Spleen (tissue), 13 donors: ENCODE measurements at regions of chr9 and their contacts with region 1.

Region 1: DNA sequence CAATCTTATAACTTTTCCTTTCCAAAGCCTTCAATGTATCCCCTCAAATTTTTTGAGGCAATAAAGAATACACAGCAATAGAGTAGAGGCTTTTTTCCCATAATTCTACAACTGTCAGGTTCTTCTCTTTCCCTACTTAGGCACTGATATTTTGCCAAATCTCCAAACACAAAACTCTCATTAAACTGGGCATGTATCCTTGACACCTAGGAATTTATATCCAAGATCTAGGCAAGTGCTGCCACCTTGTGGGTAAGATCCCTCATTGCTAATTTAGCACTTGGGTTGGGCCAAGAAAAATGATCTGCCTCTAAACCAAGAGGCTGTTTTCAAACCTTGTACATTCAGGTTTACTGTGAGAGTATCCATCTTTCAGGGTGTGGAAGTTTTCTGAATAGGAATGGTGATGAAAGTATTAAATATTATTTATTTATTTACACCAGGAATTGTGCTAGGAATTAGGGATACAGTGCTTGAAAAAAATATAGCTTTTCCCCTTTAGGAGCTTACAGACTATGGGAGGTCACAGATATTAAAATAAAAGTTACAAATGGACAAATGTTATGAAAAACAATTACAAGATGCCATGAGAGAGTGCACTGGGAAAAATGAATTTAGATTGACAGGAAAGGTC is 17.6 kb downstream of the TSTD2 start:
- DNase-seq: no peak
- H3K4me3 ChIP-seq: no peak overlapping the region
- H3K27ac ChIP-seq: no peak overlapping the region
- H3K4me1 ChIP-seq: peaks cover 0 to 8% (median 2%) of the 10 kb centered on the region in 6 donors
- H3K27me3 ChIP-seq: no peaks in the 10 kb centered on the region
- CTCF ChIP-seq: peak; percentile 70 to 90 (median 85)
- POLR2A ChIP-seq: no peak

Region 2: GRCh38 chr9:96854073-96854876 is 761.3 kb before region 1 on chr9 and contains the start of gene ZNF782:
- intact Hi-C with region 1: loop called (anchors 10 kb)
- DNase-seq: peak; percentile 96
- H3K4me3 ChIP-seq: peak within 1 kb of the TSS; percentile 82 to 94 (median 93)
- H3K27ac ChIP-seq: peak within 1 kb of the TSS; percentile 58 to 89 (median 80)
- H3K4me1 ChIP-seq: peaks cover 12 to 45% (median 33%) of the 10 kb centered on the region in 6 donors
- H3K27me3 ChIP-seq: peaks cover 0 to 5% (median 0%) of the 10 kb centered on the region in 7 donors
- CTCF ChIP-seq: peak in 1 of 11 experiments; percentile 16
- POLR2A ChIP-seq: no peak
- total RNA-seq, gene ZNF782: 6.2 to 18.0 (median 8.2) TPM

Region 3: DNA sequence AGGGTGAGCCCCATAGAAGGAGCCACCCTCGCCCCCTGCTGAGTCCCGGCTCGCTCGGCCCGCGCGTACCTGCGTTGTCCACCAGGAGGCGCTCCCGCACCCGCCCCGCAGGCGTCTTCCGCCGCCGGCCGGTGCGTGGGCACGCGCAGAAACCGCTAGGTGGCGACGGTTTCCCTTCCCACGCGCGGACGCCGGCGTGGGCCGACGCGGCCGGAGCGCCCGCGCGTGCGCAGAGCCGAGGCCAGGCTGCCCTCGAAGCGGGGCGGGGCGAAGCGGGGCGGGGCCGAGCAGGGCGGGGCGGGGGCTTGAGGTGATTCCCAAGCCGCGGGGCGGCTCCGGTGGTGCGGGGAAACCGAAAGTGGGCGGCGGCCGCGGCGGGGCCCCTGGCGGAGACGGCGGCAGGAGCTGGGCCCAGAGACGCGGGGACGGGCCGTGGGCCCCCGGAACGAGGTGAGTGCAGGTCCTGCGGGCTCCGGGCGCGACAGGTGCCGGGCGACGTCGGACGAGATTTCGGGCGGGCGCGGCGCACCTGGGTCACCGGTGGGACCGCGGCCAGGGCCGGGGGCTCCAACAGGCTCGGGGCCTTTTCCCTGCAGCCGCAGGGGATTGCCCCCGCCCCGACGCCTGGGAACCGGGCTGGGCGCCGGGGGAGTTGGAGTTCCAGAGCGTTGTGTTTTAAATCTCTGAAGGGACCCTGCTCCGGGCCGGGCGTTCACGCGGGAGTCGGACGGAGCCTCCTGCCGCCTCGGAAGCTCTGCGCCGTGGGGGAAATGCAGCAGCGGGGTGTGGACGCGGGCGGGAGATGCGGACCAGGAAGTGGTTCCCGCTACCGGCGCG is 203.5 kb before region 1 on chr9 and contains the start of gene TDRD7:
- intact Hi-C with region 1: loop called (anchors 2 kb)
- DNase-seq: peak; percentile 98
- H3K4me3 ChIP-seq: peak within 1 kb of the TSS; percentile 77 to 98 (median 95)
- H3K27ac ChIP-seq: peak within 1 kb of the TSS; percentile 75 to 97 (median 92)
- H3K4me1 ChIP-seq: peaks cover 10 to 52% (median 21%) of the 10 kb centered on the region in 6 donors
- H3K27me3 ChIP-seq: no peaks in the 10 kb centered on the region
- CTCF ChIP-seq: peak; percentile 97 to 100 (median 100)
- POLR2A ChIP-seq: no peak
- total RNA-seq, gene TDRD7: 12.0 to 18.7 (median 15.6) TPM

Region 4: DNA sequence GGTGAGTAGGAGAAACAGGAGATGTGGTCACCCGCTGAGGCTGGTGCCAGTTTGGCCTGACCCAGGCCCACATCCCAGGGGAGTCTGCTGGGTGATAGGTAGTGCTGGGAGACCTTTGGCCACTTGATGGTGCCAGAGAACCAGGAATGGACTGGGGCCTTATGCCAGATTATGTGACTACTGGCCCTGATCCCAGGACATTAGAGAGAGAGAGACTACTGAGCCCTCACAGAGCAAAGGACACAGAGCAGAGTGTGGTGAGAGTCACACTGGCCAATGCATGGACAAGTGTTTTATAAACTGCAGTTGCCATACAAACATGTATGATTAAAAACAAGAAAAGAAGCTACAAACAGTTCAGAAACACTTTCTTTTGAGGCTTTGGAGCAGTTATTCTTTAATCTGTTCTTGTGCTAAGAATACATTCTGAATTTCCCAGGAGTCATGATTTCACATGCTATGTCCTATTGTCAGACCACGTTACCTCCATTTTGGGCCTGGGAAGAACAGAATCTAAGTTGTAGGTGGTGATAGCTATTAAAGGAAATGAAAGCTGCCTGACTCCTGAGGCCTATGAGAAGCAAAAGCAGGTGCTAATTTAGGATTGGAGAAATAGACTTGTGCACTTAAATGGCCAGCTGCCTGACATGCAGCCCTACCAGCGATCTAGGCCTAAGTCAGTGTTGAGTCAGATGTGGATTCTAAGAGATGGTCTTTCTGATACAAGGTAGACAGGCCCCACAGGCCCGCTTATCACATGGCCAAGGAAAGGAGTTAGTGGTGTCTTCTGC is 146.7 kb before region 1 on chr9:
- intact Hi-C with region 1: loop called (anchors 5 kb)
- DNase-seq: no peak
- H3K4me3 ChIP-seq: no peak overlapping the region
- H3K27ac ChIP-seq: no peak overlapping the region
- H3K4me1 ChIP-seq: peaks cover 0 to 3% (median 0%) of the 10 kb centered on the region in 6 donors
- H3K27me3 ChIP-seq: no peaks in the 10 kb centered on the region
- CTCF ChIP-seq: peak; percentile 35 to 76 (median 59)
- POLR2A ChIP-seq: no peak